ENCODE measurements at regions of chrX and their contacts with region 1.

Region 1: GRCh38 chrX:46408553-46409407 is 136.4 kb downstream of the ZNF674 start:
- DNase-seq: peak; percentile 69
- CTCF ChIP-seq: peak; percentile 90

Region 2: DNA sequence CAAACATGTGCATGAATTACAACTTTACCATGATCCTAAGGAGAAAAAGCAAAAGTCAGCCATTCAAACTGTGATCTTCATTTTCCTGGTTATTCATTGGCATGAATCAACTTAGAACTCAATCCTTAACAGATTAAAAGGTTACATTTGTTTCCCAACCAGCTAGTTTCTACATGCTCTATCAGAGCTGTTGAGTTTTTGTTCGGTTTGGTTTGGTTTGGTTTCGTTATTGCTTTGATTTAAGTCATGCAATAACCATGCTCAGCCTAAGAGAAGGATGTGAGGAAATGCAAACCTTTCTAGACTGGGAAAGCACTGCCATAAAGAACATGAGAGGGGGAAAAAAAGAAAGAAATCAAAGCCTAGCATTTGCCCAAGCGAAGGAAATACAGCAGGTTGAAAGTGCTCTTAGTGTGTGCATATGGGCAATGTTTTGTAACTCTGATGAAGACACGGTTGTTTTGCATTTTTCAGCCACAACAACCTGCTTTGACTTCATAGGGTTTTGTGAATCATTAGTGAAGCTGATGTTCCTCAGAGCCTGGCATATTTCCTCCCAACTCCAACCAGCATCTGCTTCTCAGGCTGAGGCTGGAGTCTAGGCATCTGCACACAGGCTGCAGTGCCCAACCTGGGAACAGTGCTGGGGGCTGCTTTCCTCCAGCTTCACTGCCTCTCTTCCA is 97.8 kb before region 1 on chrX:
- in situ Hi-C with region 1: no loop called
- DNase-seq: no peak
- CTCF ChIP-seq: no peak

Region 3: GRCh38 chrX:46477435-46477834 is 68.7 kb after region 1 on chrX:
- in situ Hi-C with region 1: no loop called
- DNase-seq: no peak
- CTCF ChIP-seq: no peak

Region 4: DNA sequence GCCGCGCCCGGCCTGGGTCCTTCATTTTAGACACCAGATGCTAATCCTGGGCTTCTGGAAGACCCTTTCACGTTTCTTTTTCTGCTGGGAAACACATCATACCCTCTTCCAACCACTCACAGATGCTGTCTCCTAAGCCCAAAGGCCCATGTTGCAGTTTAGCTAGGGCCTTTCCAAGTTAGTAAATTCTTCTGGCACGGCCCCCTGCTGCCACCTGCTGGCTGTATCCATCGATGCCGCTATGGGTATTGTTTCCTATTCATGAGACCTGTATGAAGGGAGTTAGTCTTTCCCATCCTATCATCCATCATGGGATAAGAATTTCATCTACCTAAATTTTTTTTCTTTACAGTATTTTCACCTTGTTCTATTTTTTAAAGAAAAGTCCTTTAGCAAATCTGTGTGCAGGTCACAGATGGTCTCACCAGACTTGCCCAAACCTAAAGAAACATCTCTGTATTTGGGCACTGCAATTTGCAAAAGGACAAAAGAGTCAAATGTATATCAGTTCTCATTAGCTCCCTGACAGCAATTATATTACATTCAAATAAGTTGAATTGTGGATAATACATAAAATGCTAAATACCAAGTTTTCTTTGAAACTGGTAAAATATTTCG is 387.9 kb after region 1 on chrX:
- in situ Hi-C with region 1: loop called (anchors 25 kb)
- DNase-seq: peak; percentile 58
- CTCF ChIP-seq: peak; percentile 84

Region 5: GRCh38 chrX:47568656-47569295 is 1160.0 kb after region 1 on chrX:
- in situ Hi-C with region 1: no loop called
- DNase-seq: no peak
- CTCF ChIP-seq: peak; percentile 34

Measured in GM13977 (cell line).